HEK293 (cell line): ENCODE measurements at regions of chr22 and their contacts with region 1.

Region 1: DNA sequence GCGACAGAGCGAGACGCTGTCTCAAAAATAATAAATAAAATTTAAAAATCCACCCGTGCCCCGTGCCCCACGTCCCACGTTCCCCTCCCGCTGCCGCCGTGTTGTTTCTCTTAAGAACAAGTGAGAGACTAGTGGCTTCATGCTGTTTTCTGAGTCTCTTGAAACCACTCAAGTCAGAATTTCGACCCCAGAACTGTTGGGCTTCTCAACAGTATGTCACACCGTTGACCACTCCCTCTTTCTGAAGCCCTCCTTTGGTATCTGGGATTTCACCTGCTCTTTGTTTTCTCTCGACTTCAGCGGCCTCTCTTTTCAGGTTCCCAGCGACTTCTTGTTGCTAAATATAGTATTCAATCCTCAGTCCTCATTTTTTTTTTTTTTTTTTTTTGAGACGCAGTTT is 974 bp downstream of the PPIL2 start:
- H3K4me3 ChIP-seq: peak overlapping the region; percentile 75
- H3K27ac ChIP-seq: no peak overlapping the region
- H3K4me1 ChIP-seq: no peaks in the 10 kb centered on the region
- CTCF ChIP-seq: no peak

Region 2: DNA sequence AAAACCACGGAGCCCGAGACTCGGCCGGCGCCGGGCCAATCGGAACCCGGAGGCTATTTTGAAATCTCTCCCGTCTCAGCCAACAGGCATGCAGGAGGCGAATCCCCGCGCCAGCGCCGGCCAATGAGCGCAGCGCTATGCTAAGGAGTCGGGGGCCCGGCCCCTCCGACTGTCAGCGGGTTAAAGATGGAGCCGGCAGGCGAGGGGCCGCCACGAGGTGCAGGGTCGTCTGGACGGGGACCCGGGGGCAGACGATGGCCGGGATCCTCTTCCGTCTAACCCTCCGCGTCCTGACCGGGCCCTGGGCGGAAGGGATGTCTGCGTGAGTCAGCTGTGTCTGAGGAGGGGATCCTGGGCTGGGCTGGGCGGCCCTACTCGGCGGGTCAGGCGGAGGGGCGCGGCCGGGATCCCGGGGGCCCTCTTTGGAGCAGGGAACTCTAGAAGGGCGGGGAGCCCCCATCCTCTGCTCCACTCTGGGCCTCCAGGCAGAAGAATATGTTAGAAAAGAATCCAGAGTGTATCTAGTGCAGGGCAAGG is 14.7 kb before region 1 on chr22:
- CTCF ChIA-PET with region 1: interaction called, 5 read pairs
- POLR2A ChIA-PET with region 1: interaction called, 13 read pairs
- H3K4me3 ChIP-seq: peak overlapping the region; percentile 83
- H3K27ac ChIP-seq: peak overlapping the region; percentile 48; the same call in 1 of the 2 replicates
- H3K4me1 ChIP-seq: no peaks in the 10 kb centered on the region
- CTCF ChIP-seq: no peak